ENCODE measurements at regions of chr9 and their contacts with region 1.

Region 1: GRCh38 chr9:120985810-120986222 is 59.2 kb upstream of the TRAF1 start:
- DNase-seq: peak; percentile 59
- H3K4me3 ChIP-seq: no peak overlapping the region
- H3K27ac ChIP-seq: no peak overlapping the region
- H3K4me1 ChIP-seq: peaks cover 0 to 2% of the 10 kb centered on the region in 2 experiments; a peak in 1 of 4 replicates
- H3K27me3 ChIP-seq: no peaks in the 10 kb centered on the region
- CTCF ChIP-seq: peak; percentile 72
- EP300 ChIP-seq: no peak
- RAD21 ChIP-seq: peak; percentile 78

Region 2: DNA sequence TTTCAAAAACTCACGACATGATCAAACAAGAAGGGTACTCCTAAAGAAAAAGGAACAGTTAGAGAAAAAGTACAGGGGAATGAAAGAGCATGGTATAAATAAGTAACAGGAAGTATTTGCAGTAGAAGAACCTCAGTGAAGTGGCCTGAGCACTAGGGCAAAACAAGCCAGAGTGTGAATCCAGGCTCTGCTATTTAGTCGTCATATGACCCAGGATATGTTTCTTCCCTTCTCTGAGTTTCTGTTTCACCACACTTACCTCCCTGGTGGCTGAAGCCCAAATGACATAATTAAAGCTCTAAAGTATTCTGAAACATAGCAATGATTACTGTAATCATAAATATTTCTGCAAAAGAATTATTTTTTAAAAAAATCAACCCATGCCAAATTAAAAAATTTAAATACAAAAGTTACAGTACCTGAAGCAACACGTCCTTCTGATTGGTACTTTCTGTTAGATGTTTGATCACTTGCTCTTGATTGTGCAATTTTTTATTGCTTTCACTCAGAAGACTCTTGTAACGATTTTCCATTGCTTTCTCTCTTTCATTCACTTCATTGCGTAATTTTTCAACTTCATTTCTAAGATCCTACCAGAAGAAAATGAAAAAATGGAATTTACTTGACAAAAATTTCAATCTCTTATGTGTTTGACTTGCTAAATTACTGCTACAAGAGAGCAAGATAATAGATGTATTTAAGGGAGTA is 494.8 kb before region 1 on chr9:
- CTCF ChIA-PET with region 1: no interaction called
- POLR2A ChIA-PET with region 1: no interaction called
- DNase-seq: no peak
- H3K4me3 ChIP-seq: no peak overlapping the region
- H3K27ac ChIP-seq: no peak overlapping the region
- H3K4me1 ChIP-seq: peaks cover 0 to 5% of the 10 kb centered on the region in 2 experiments; a peak in 1 of 4 replicates
- H3K27me3 ChIP-seq: no peaks in the 10 kb centered on the region
- CTCF ChIP-seq: no peak
- EP300 ChIP-seq: no peak
- RAD21 ChIP-seq: no peak

Region 3: GRCh38 chr9:120764476-120764875 is 221.3 kb before region 1 on chr9:
- CTCF ChIA-PET with region 1: no interaction called
- POLR2A ChIA-PET with region 1: no interaction called
- DNase-seq: no peak
- H3K4me3 ChIP-seq: no peak overlapping the region
- H3K27ac ChIP-seq: no peak overlapping the region
- H3K4me1 ChIP-seq: no peaks in the 10 kb centered on the region
- H3K27me3 ChIP-seq: no peaks in the 10 kb centered on the region
- CTCF ChIP-seq: no peak
- EP300 ChIP-seq: no peak
- RAD21 ChIP-seq: no peak

Region 4: DNA sequence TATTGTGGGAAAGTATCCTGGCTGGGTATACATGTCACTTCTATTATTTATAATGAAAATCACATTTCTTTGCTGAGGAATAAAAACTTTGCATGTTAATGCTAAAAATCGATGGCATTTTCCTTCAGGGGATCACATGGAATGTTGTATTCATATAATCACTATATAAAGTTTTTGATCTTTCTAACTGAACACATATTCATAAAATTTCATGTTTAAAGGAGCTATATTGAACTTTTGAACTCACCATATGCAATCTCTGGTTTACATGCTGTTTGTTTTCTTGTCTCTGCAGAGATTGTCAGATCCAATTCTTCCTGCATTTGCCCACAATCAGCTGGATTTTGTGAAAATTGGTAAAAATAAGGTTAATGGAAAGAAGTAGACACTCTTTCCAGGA is 25.8 kb before region 1 on chr9:
- CTCF ChIA-PET with region 1: interaction called, 23 read pairs
- POLR2A ChIA-PET with region 1: no interaction called
- DNase-seq: no peak
- H3K4me3 ChIP-seq: no peak overlapping the region
- H3K27ac ChIP-seq: no peak overlapping the region
- H3K4me1 ChIP-seq: no peaks in the 10 kb centered on the region
- H3K27me3 ChIP-seq: no peaks in the 10 kb centered on the region
- CTCF ChIP-seq: no peak
- EP300 ChIP-seq: no peak
- RAD21 ChIP-seq: no peak

Region 5: GRCh38 chr9:120965344-120966012 is 20.3 kb before region 1 on chr9:
- CTCF ChIA-PET with region 1: interaction called, 23 read pairs
- POLR2A ChIA-PET with region 1: no interaction called
- DNase-seq: peak; percentile 25
- H3K4me3 ChIP-seq: no peak overlapping the region
- H3K27ac ChIP-seq: no peak overlapping the region
- H3K4me1 ChIP-seq: peaks cover 0 to 2% of the 10 kb centered on the region in 2 experiments; a peak in 1 of 4 replicates
- H3K27me3 ChIP-seq: no peaks in the 10 kb centered on the region
- CTCF ChIP-seq: no peak
- EP300 ChIP-seq: no peak
- RAD21 ChIP-seq: no peak

Region 6: DNA sequence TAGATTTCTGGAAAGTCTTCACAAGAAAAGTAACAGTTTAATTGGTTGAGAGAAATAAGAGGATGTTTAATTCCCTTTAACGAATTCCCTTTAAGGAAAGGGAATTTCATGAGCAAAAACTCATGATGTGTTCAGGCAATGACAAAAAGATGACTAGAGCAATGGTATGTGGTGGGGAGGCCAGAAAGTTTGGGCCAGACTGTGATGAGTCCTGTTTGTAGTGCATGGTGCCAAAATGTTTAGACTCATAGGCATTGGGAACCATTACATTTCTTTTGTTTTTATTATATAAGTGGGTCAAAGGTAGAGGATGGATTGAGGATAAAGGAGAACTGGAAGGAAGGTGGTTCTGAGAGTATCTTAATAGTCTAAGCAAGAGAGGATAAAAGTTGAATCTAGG is 99.8 kb after region 1 on chr9:
- CTCF ChIA-PET with region 1: no interaction called
- POLR2A ChIA-PET with region 1: no interaction called
- DNase-seq: no peak
- H3K4me3 ChIP-seq: no peak overlapping the region
- H3K27ac ChIP-seq: no peak overlapping the region
- H3K4me1 ChIP-seq: no peaks in the 10 kb centered on the region; a peak in 1 of 4 replicates
- H3K27me3 ChIP-seq: no peaks in the 10 kb centered on the region
- CTCF ChIP-seq: no peak
- EP300 ChIP-seq: no peak
- RAD21 ChIP-seq: no peak

Region 7: DNA sequence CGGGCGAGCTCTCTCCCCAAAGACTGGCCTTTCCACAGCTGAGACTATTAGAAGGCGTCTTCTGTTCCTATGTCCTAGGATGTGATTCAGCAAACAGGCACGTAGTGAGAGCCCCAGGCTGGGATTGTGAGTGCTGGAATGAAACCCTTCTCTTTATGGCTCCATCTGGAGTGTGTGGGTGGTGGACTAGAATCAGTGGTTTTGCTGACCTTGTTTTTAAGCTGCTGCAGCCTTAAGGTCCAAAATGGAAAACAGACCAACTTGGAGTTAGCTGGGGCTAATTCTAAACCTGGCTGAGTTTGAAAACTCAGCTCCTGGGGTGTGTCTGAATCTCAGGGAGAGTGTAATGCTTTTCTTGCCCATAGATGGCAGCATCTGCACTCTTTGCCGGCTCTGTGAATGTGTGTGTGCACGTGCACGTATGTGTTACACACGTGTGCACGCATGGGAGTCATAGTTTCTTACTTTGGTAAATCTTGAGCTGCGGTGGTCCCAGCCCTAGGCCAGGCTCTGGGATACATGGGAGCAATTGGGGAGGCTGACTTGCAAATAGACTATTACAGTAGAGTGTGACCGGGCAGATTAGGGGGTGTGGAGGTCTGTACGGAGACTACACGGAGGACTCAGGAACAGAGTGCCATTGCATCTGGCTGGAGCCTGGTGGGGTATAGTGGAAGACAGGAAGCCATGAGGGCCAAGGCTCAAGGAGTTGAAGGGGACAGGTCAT is 292.9 kb after region 1 on chr9:
- CTCF ChIA-PET with region 1: no interaction called
- POLR2A ChIA-PET with region 1: no interaction called
- DNase-seq: peak; percentile 59
- H3K4me3 ChIP-seq: peak overlapping the region in 1 of 2 experiments; percentile 40; a peak in 2 of 4 replicates
- H3K27ac ChIP-seq: peak overlapping the region; percentile 90 to 95
- H3K4me1 ChIP-seq: peaks cover 33 to 75% of the 10 kb centered on the region in 2 experiments
- H3K27me3 ChIP-seq: no peaks in the 10 kb centered on the region
- CTCF ChIP-seq: peak; percentile 86
- EP300 ChIP-seq: peak; percentile 29 to 74; a peak in 1 of 4 replicates
- RAD21 ChIP-seq: peak; percentile 61

Measured in SK-N-SH (cell line).